Caco-2 (cell line): ENCODE measurements at regions of chr1 and their contacts with region 1.

Region 1: DNA sequence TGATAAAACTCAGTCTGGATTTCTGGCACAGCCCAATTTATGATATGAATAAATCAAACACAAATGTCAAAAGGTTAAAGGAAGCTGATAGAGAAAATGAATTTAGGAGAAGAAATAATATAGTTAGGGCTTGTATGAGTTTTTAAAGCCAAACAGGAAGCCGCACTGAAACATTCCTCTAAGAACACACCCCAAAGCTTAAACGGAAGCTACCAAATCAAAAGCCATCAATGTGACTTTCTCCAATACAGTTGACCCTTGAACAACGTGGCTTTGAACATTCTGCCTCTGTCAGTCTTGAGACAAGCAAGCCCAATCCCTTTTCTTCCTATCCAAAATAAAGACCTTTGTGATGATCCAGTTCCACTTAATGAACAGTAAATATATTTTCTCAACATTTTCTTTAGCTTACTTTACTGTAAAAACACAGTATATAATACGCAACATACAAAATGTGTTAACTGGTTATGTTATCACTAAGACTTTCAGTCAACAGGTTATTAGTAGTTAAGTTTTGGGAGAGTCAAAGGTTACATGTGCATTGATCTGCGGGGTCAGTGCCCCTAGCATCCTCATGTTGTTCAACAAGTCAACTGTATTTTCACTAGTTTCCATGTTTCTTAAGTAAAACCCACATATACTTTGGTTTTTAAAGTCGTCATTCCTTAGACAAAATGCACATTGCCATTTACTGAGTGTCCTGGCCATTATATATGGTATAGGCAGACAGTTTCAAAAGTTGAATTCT is 11.2 kb downstream of the SERBP1 start:
- DNase-seq: no peak
- H3K4me3 ChIP-seq: no peak overlapping the region
- H3K4me3 Mint-ChIP-seq: no peak overlapping the region
- H3K27ac Mint-ChIP-seq: no peak overlapping the region
- H3K4me1 ChIP-seq: no peaks in the 10 kb centered on the region
- H3K4me1 Mint-ChIP-seq: no peaks in the 10 kb centered on the region
- H3K27me3 ChIP-seq: no peaks in the 10 kb centered on the region
- H3K27me3 Mint-ChIP-seq: no peaks in the 10 kb centered on the region
- CTCF ChIP-seq: no peak

Region 2: GRCh38 chr1:66253330-66253921 is 1165.6 kb before region 1 on chr1:
- CTCF ChIA-PET with region 1: no interaction called
- POLR2A ChIA-PET with region 1: no interaction called
- intact Hi-C with region 1: no loop called
- DNase-seq: peak in 1 of 2 experiments; percentile 18
- H3K4me3 ChIP-seq: no peak overlapping the region
- H3K4me3 Mint-ChIP-seq: no peak overlapping the region
- H3K27ac Mint-ChIP-seq: no peak overlapping the region
- H3K4me1 ChIP-seq: no peaks in the 10 kb centered on the region
- H3K4me1 Mint-ChIP-seq: no peaks in the 10 kb centered on the region
- H3K27me3 ChIP-seq: no peaks in the 10 kb centered on the region
- H3K27me3 Mint-ChIP-seq: peaks cover 14% of the 10 kb centered on the region
- CTCF ChIP-seq: peak; percentile 24 to 50

Region 3: DNA sequence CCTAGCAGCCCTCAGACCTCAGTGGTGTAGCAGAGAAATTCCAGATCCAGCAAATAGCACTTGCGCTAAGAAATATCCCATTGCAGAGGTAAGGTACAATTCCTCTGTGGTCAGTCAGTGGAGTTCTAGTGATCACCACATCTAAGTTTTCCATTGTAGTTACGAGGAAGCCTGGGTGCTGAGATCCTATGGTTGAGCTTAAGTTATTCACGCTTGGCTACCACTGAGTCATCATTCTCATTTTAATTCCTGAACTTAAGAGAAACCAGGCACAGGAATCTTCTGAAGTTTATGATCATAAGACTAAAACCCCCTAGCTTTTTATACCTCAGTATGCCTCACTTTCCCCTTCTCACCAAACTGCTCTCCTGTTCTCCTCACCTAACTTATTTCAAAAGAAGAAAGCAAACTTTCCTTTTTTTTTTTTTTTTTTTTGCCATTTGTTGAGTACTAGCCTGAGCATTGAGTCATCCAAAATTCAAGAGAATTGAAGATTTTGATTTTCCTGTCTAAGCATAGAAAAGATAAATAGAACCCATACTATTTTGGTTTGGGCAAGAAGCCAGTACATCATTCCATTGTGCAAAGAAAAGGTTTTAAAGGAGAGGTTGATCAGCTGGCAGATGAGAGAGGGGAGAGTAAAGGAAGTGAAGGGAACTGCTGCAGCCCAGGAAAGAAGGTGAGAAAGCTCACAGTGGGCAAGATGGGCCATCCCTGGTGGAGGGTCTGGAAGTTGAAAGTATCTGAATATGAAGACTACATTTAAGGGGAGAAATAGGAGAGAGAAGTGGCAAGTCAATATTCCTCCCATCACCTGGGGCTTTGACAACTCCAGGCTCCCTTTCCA is 28.7 kb before region 1 on chr1:
- CTCF ChIA-PET with region 1: no interaction called
- POLR2A ChIA-PET with region 1: interaction called, 12 read pairs
- intact Hi-C with region 1: no loop called
- DNase-seq: no peak
- H3K4me3 ChIP-seq: no peak overlapping the region
- H3K4me3 Mint-ChIP-seq: no peak overlapping the region
- H3K27ac Mint-ChIP-seq: no peak overlapping the region
- H3K4me1 ChIP-seq: no peaks in the 10 kb centered on the region
- H3K4me1 Mint-ChIP-seq: no peaks in the 10 kb centered on the region
- H3K27me3 ChIP-seq: no peaks in the 10 kb centered on the region
- H3K27me3 Mint-ChIP-seq: no peaks in the 10 kb centered on the region
- CTCF ChIP-seq: no peak

Region 4: GRCh38 chr1:67503974-67504373 is 85.0 kb after region 1 on chr1:
- CTCF ChIA-PET with region 1: no interaction called
- POLR2A ChIA-PET with region 1: no interaction called
- intact Hi-C with region 1: no loop called
- DNase-seq: no peak
- H3K4me3 ChIP-seq: no peak overlapping the region
- H3K4me3 Mint-ChIP-seq: no peak overlapping the region
- H3K27ac Mint-ChIP-seq: no peak overlapping the region
- H3K4me1 ChIP-seq: no peaks in the 10 kb centered on the region; the same call in 1 of the 2 replicates
- H3K4me1 Mint-ChIP-seq: no peaks in the 10 kb centered on the region
- H3K27me3 ChIP-seq: no peaks in the 10 kb centered on the region
- H3K27me3 Mint-ChIP-seq: no peaks in the 10 kb centered on the region
- CTCF ChIP-seq: no peak